ENCODE measurements at regions of chr18 and their contacts with region 1.

Region 1: DNA sequence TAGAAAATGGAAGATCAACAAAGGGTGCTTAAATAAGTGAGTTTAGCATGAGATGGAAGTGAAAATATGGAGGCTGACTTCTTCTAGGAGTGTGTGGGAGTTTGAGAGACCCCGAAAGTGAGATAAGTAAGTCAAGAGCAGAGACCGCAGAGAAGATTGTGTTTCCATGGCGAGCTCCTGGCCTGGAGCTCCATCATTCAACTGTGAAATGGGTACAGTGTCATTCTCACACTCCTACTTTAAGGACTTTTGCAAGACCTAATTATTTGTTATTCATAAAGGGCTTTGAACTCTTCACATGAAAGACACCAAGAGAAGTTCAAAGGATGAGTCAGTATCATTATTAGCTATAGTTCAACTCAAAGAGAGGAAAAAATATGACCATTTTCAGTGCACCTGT is 134.2 kb upstream of the PIK3C3 start:
- DNase-seq: no peak
- H3K4me3 ChIP-seq: no peak overlapping the region
- H3K27ac ChIP-seq: no peak overlapping the region
- H3K4me1 ChIP-seq: no peaks in the 10 kb centered on the region
- H3K27me3 ChIP-seq: no peaks in the 10 kb centered on the region
- CTCF ChIP-seq: no peak
- POLR2A ChIP-seq: no peak

Region 2: GRCh38 chr18:41613003-41613609 is 207.7 kb before region 1 on chr18:
- intact Hi-C with region 1: loop called (anchors 5 kb)
- DNase-seq: no peak
- H3K4me3 ChIP-seq: no peak overlapping the region
- H3K27ac ChIP-seq: no peak overlapping the region
- H3K4me1 ChIP-seq: no peaks in the 10 kb centered on the region
- H3K27me3 ChIP-seq: no peaks in the 10 kb centered on the region
- CTCF ChIP-seq: no peak
- POLR2A ChIP-seq: no peak

Region 3: DNA sequence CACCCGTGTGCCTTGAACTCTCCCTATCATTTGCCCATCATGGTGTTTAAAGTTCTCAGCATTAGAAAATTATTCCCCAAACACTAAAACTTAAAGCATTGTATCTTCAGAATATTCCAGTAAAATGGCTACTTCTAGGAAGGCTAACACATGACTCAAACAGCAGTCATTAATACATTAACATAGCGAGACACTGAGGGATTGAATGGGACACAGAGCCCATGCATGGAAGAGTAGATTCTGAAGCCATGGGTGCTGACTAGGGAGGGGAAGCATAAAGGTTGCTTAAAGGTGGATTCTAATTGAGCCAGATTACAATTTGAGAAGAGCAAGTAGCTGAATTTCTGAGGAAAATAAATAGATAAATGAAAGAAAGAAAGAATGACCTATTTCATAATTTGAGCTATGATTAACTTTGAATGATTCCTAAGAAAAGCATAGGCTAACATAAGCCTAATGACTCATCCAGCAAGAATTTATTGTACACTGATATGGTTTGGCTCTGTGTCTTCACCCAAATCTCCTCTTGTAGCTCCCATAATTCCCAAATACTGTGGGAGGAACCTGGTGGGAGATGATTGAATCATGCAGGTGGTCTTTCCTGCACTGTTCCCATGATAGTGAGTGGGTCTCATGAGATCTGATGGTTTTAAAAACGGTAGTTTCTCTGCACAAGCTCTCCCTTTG is 54.5 kb after region 1 on chr18:
- intact Hi-C with region 1: no loop called
- DNase-seq: no peak
- H3K4me3 ChIP-seq: no peak overlapping the region
- H3K27ac ChIP-seq: no peak overlapping the region
- H3K4me1 ChIP-seq: no peaks in the 10 kb centered on the region
- H3K27me3 ChIP-seq: no peaks in the 10 kb centered on the region
- CTCF ChIP-seq: no peak
- POLR2A ChIP-seq: no peak